ENCODE measurements at regions of chr3 and their contacts with region 1.

Region 1: GRCh38 chr3:36155515-36155914 is 224.8 kb upstream of the STAC start:
- DNase-seq: peak; percentile 75
- ATAC-seq: peak; percentile 84
- H3K4me3 ChIP-seq: no peak overlapping the region
- H3K27ac ChIP-seq: peak overlapping the region; percentile 67
- H3K4me1 ChIP-seq: peaks cover 25% of the 10 kb centered on the region
- H3K27me3 ChIP-seq: no peaks in the 10 kb centered on the region
- CTCF ChIP-seq: no peak

Region 2: DNA sequence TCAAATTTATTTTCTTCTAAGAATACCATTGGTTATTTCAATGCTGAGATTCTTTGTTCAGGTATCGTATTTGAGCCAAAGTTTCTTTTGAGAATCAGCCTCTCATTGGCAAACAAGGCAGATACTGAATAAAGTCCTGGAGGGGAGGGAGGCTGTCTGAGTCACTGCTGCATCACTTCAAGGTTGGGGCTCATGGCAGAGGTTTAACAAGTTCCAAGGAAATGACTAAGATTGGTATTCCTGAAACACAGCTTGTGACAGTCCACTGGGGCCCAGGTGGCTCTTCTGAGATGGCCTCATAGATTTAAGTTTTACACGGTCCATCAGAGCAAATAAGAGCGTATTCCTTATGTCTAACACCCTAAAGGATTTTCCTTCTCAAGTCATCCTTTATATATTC is 11.0 kb after region 1 on chr3:
- CTCF ChIA-PET with region 1: no interaction called
- POLR2A ChIA-PET with region 1: no interaction called
- intact Hi-C with region 1: loop called (anchors 1 kb)
- DNase-seq: peak; percentile 97
- ATAC-seq: peak; percentile 99
- H3K4me3 ChIP-seq: peak overlapping the region; percentile 35
- H3K27ac ChIP-seq: peak overlapping the region; percentile 79
- H3K4me1 ChIP-seq: peaks cover 21% of the 10 kb centered on the region
- H3K27me3 ChIP-seq: no peaks in the 10 kb centered on the region
- CTCF ChIP-seq: no peak

Region 3: GRCh38 chr3:36444909-36445308 is 289.4 kb after region 1 on chr3:
- CTCF ChIA-PET with region 1: no interaction called
- POLR2A ChIA-PET with region 1: no interaction called
- intact Hi-C with region 1: no loop called
- DNase-seq: peak; percentile 53
- ATAC-seq: peak; percentile 78
- H3K4me3 ChIP-seq: no peak overlapping the region
- H3K27ac ChIP-seq: no peak overlapping the region
- H3K4me1 ChIP-seq: peaks cover 11% of the 10 kb centered on the region
- H3K27me3 ChIP-seq: no peaks in the 10 kb centered on the region
- CTCF ChIP-seq: no peak